ENCODE measurements at regions of chr1 and their contacts with region 1.

Region 1: DNA sequence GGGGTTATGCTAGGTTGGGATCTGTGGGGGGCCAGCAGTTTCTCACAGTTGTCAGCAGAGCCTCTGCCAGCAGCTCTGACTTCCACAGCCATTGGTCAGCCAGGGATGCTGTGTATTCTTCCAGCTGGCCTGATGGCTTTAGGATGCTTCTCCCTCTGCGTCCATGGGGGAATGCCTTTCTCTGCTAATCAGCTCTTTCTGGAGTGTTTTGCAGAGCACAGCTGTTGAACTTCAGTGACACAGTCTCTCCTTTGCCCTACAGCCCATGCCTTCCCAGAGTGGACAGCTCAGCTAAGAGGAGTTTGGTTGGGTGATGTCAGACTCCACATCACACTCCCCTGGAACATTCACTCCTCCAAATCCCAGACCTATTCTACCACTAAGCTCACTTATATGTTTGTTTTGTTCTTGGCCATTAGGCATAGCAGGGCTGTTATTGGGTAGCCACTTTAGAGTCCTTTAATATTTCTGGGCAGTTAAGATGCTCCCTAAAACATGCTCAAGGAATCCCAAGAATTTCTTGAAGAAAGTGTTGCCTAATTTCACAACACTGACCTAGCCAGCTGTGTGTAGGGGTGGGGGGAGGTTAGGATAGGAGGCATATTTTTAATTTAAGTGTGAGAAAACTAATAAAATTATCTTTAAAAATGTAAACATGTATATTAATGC is 75.3 kb upstream of the KIAA0040 start:
- DNase-seq: peak; percentile 83
- ATAC-seq: peak; percentile 97

Region 2: DNA sequence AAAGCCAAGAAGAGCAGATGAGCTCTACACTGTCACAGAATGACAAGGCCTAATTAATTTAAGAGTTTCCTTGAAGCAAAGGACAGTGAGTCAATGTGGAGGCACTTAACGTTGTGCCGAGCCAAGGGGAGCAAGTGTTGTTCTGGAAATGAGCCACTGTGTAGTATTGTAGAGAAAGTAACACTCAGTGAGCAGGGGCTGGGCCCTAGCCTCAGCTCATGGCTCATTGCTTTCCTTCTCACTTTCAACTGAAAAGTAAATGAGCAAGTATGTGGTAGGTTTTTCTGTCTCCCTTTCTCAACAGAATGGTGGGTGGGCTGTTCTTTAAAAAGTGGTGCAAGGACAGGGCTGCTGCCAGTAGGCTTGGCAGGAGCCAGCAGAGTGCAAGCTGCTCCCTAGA is 63.5 kb before region 1 on chr1:
- intact Hi-C with region 1: loop called (anchors 5 kb)
- DNase-seq: no peak
- ATAC-seq: no peak

Region 3: DNA sequence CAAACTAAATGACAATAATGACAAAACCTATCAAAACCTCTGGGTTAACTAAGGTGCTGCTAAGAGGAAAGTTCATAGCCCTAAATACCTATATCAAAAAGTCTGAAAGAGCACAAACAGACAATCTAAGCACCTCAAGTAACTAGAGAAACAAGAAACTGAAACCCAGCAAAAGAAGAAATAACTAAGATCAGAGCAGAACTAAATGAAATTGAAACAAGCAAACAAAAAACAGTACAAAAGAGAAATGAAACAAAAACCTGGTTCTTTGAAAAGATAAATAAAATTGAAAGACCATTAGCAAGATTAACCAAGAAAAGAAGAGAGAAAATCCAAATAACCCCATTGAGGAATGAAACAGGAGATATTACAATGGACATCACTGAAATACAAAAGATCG is 30.5 kb before region 1 on chr1:
- intact Hi-C with region 1: no loop called
- DNase-seq: no peak
- ATAC-seq: no peak

Measured in Right ventricle myocardium inferior (tissue), 1 donor.